ENCODE measurements at regions of chr4 and their contacts with region 1.

Region 1: DNA sequence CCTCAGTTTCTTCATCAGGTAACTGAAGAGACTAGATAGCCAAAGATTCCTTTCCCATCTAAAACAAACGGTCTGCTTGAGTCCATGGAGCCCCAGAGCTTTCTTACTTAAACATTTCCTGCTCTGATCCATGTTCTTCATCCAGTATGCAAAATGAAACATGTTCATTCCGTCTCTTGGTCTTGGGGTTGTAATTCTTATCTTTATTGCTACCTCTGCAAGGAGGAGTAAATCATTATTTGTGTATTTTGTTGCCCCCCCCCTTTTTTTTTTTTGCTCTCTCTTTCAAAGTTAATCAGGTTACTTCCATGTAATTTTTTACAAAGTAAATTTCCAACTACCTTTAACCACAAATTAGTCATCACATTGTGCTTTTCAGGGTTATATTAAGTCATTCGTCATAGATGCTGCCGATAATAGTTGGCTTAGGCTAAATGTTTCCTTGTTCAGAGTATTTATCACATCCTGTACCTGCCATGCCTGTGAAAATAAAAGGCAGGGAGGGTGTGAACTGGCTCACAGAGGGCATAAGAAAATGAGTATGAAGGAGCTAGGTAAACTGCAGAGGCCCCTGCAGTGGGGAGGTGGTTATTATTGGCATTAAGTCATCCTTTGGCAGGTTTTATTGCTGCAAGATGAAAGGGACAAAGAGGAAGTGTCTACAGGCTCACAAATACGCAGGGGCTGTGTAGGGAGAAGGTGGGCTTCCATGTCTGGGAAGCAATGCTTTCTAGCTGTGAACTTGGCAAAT is 76.7 kb upstream of the HS3ST1 start:
- DNase-seq: no peak
- ATAC-seq: peak in 7 of 8 donors; percentile 27 to 77 (median 60)
- H3K4me3 ChIP-seq: no peak overlapping the region
- H3K27ac ChIP-seq: peak overlapping the region in 3 of 10 donors; percentile 3 to 25 (median 18)
- H3K4me1 ChIP-seq: peaks cover 0 to 23% (median 0%) of the 10 kb centered on the region in 9 donors
- H3K27me3 ChIP-seq: no peaks in the 10 kb centered on the region
- CTCF ChIP-seq: no peak

Region 2: GRCh38 chr4:11614399-11614798 is 109.0 kb after region 1 on chr4:
- intact Hi-C with region 1: loop called in 1 of 10 experiments (anchors 10 kb)
- DNase-seq: no peak
- ATAC-seq: no peak
- H3K4me3 ChIP-seq: no peak overlapping the region
- H3K27ac ChIP-seq: no peak overlapping the region
- H3K4me1 ChIP-seq: peaks cover 0 to 9% (median 0%) of the 10 kb centered on the region in 9 donors
- H3K27me3 ChIP-seq: no peaks in the 10 kb centered on the region
- CTCF ChIP-seq: no peak

Measured in heart right ventricle (tissue), 16 donors.